ENCODE measurements at regions of chr11 and their contacts with region 1.

Region 1: GRCh38 chr11:125429166-125429707 is 66.8 kb downstream of the FEZ1 start:
- DNase-seq: no peak
- H3K4me3 ChIP-seq: no peak overlapping the region
- H3K27me3 ChIP-seq: peaks cover 10% of the 10 kb centered on the region
- CTCF ChIP-seq: peak; percentile 83

Region 2: GRCh38 chr11:124961972-124962609 is 467.1 kb before region 1 on chr11:
- CTCF ChIA-PET with region 1: interaction called, 13 read pairs
- POLR2A ChIA-PET with region 1: no interaction called
- DNase-seq: no peak
- H3K4me3 ChIP-seq: no peak overlapping the region
- H3K27me3 ChIP-seq: no peaks in the 10 kb centered on the region
- CTCF ChIP-seq: peak; percentile 71

Region 3: GRCh38 chr11:125313271-125314219 is 115.7 kb before region 1 on chr11:
- CTCF ChIA-PET with region 1: no interaction called
- POLR2A ChIA-PET with region 1: no interaction called
- DNase-seq: no peak
- H3K4me3 ChIP-seq: no peak overlapping the region
- H3K27me3 ChIP-seq: peaks cover 11% of the 10 kb centered on the region
- CTCF ChIP-seq: no peak

Region 4: GRCh38 chr11:125413226-125413625 is 16.0 kb before region 1 on chr11:
- CTCF ChIA-PET with region 1: interaction called, 23 read pairs
- POLR2A ChIA-PET with region 1: no interaction called
- DNase-seq: no peak
- H3K4me3 ChIP-seq: no peak overlapping the region
- H3K27me3 ChIP-seq: peaks cover 20% of the 10 kb centered on the region
- CTCF ChIP-seq: no peak

Region 5: GRCh38 chr11:125441648-125442410 is 12.6 kb after region 1 on chr11:
- CTCF ChIA-PET with region 1: interaction called, 15 read pairs
- POLR2A ChIA-PET with region 1: no interaction called
- DNase-seq: no peak
- H3K4me3 ChIP-seq: no peak overlapping the region
- H3K27me3 ChIP-seq: no peaks in the 10 kb centered on the region
- CTCF ChIP-seq: no peak